BJ (cell line): ENCODE measurements at regions of chr3 and their contacts with region 1.

Region 1: DNA sequence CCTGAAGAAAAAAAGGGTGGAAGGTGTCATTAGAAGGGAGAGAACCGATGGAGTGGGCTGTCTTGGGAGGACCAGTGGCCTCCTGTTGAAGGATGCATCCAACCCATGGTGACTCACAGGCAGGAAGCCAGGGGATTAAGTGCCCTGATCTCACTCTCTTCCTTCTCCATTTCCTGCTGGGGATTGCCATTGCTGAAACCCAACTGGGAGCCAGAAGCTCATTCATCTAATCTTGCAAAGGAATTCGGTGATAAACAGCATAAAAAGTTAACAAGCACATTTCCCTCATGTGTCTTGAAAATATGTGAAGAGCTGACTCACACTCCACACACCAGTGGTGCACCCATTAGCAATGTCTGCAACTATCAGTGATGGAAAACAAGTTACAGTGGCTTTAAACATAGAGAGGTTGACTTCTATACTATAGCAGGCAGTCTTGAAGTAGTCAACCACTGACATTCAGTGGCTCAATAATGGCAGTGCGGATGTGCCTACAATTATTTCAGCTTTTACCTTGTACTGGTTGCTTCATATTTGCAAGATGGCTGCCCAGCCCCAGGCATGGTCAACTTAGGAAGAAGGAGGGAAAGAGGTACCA is 12.8 kb upstream of the CSRNP1 start:
- DNase-seq: peak; percentile 87
- H3K4me3 ChIP-seq: no peak overlapping the region
- H3K27me3 ChIP-seq: no peaks in the 10 kb centered on the region
- CTCF ChIP-seq: no peak

Region 2: DNA sequence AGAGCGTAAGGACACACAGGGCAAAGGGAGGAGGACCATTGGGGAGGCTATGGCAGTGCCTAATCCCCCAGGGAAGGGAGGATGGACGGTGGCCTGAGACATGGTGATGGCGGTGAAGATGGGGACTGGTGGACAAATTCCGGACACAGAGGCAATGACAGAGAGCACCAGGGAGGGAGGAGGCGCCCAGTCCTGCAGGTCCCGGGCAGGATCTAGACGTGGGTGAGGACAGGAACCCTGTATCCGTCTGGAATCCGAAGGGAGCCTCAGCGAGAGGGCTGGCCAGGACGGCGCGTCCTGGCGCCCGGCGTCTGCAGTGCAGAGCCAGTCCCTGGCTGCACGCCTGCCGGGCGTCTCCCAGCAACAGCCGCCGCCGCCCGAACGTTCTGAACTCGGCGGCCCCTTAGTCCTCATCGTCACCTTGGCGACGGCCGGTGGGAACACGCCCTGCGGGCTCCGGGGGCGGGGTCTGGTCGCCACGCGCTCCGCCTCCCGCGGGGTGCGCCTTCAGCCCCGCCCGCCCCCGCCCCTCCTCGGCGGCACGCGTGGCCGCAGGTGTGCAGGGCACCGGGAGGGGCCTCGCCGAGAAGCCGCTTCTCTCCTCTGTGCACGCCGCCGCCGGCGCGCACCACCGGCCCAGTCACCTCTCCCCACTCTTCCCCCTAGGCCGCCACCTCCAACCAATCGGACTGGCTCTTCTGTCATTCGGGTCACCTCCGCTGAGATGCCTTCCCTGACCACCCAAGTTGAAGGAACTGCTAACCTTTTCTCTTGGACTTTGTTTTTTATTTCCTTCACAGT is 14.5 kb after region 1 on chr3:
- CTCF ChIA-PET with region 1: interaction called, 5 read pairs
- POLR2A ChIA-PET with region 1: interaction called, 13 read pairs
- DNase-seq: peak; percentile 30
- H3K4me3 ChIP-seq: peak overlapping the region; percentile 40
- H3K27me3 ChIP-seq: no peaks in the 10 kb centered on the region
- CTCF ChIP-seq: peak; percentile 44

Region 3: GRCh38 chr3:39189959-39190269 is 23.7 kb after region 1 on chr3:
- CTCF ChIA-PET with region 1: interaction called, 17 read pairs
- POLR2A ChIA-PET with region 1: no interaction called
- DNase-seq: no peak
- H3K4me3 ChIP-seq: no peak overlapping the region
- H3K27me3 ChIP-seq: no peaks in the 10 kb centered on the region
- CTCF ChIP-seq: peak; percentile 77